Activated T-helper 1 cell treated with anti-CD3 and anti-CD28 coated beads, Interleukin-12 subunit alpha, Interleukin-12 subunit beta, Interleukin-2, Interleukin-4 antibody, amounts not matched to agents 30 ng/mL and 10 ng/mL and 1 ng/mL, durations not matched to agents 14 hours and 24 hours and 36 hours (primary cell): ENCODE measurements at regions of chr1 and their contacts with region 1.

Region 1: DNA sequence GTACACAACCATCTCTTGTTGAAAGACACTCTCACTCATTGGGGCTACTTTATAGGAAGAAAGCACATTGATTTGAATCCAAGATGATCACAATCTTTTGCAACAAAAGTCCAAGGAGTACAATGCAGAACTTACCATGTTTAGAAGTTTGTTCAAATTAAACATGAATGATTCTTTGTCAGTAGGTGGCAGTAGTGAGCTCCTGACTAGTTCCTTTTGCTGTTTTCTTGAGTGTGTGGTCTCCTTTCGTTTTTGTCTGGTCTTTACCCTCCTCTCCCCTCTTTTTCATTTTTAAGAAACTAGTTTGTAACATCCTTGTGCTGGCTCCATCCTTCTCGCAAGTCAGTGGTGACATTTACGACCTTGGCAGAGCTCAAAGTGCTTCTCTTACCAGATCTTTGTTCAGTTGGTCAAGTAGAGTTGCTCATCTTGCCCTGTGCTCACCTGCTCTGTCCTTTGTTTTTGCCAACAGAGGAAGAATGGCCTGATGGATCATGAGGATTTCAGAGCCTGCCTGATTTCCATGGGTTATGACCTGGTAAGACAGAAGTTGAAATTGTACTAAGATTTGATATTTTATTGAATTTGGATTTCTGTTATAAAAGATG is 35.7 kb upstream of the MTR start:
- DNase-seq: no peak
- H3K4me3 Mint-ChIP-seq: no peak overlapping the region
- H3K27ac Mint-ChIP-seq: no peak overlapping the region
- H3K4me1 Mint-ChIP-seq: peaks cover 5% of the 10 kb centered on the region
- H3K27me3 Mint-ChIP-seq: peaks cover 2% of the 10 kb centered on the region

Region 2: GRCh38 chr1:235617808-235618207 is 1141.5 kb before region 1 on chr1:
- intact Hi-C with region 1: no loop called
- DNase-seq: no peak
- H3K4me3 Mint-ChIP-seq: no peak overlapping the region
- H3K27ac Mint-ChIP-seq: no peak overlapping the region
- H3K4me1 Mint-ChIP-seq: no peaks in the 10 kb centered on the region
- H3K27me3 Mint-ChIP-seq: peaks cover 16% of the 10 kb centered on the region

Region 3: DNA sequence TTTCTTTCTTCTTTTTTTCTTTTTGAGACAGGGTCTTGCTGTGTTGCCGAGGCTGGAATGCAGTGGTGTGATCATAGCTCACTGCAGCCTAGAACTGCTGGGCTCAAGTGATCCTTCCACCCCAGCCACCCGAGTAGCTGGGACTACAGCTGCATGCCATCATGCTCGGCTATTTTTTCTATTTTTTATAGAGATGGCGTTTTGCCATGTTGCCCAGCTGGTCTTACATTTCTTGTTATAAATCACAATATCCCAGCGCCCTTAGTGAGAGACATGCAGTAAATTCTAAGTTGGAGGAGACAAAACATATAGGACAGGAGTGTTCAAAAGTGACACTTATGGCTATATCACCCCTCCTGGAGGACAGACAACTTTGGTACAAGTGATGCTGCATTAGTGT is 104.4 kb before region 1 on chr1:
- intact Hi-C with region 1: no loop called
- DNase-seq: no peak
- H3K4me3 Mint-ChIP-seq: no peak overlapping the region
- H3K27ac Mint-ChIP-seq: no peak overlapping the region
- H3K4me1 Mint-ChIP-seq: no peaks in the 10 kb centered on the region
- H3K27me3 Mint-ChIP-seq: peaks cover 4% of the 10 kb centered on the region

Region 4: GRCh38 chr1:236868625-236869467 is 109.5 kb after region 1 on chr1:
- intact Hi-C with region 1: loop called (anchors 1 kb)
- DNase-seq: peak; percentile 14
- H3K4me3 Mint-ChIP-seq: no peak overlapping the region
- H3K27ac Mint-ChIP-seq: no peak overlapping the region
- H3K4me1 Mint-ChIP-seq: peaks cover 18% of the 10 kb centered on the region
- H3K27me3 Mint-ChIP-seq: no peaks in the 10 kb centered on the region

Region 5: GRCh38 chr1:236913371-236914037 is 154.1 kb after region 1 on chr1:
- intact Hi-C with region 1: no loop called
- DNase-seq: no peak
- H3K4me3 Mint-ChIP-seq: no peak overlapping the region
- H3K27ac Mint-ChIP-seq: no peak overlapping the region
- H3K4me1 Mint-ChIP-seq: no peaks in the 10 kb centered on the region
- H3K27me3 Mint-ChIP-seq: peaks cover 2% of the 10 kb centered on the region

Region 6: DNA sequence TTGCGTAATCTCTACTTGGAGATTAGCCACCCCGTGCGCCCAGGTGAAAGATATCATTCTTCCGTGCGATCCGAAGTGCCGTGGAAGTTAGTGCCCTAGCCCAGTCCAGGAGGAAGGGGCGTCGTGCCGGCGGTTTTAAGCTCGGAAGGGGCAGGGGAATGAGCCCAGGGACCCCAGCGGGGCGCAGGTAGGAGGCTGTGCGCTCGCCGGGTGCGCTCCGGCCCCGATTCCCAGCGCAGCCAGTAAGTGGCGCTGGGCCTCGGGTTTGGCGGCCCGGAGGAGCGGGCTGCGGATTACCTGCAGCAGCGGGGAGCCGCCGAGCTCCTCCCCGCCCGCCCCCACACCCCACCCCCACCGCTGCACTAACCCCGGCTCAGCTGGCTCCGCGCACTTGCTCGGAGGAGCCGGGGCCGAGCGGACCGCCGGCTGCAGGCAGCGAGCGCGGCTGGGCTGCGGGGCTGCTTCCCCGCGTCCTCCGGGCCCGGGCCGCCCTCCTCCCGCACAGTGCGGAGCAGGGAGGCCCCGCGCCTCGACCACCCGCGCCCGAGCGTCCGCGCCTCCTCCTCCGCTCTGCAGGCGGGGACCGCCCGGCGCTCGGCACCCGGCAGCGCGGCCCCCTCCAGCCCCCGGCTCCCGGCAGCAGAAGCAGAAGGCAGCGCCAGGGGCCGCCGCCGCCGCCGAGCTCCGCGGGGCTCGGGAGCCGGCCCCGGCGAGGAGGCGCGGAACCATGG is 282.6 kb after region 1 on chr1 and contains the start of gene RYR2:
- intact Hi-C with region 1: loop called (anchors 10 kb)
- DNase-seq: no peak
- H3K4me3 Mint-ChIP-seq: peak within 1 kb of the TSS; percentile 32
- H3K27ac Mint-ChIP-seq: peak within 1 kb of the TSS; percentile 31
- H3K4me1 Mint-ChIP-seq: peaks cover 4% of the 10 kb centered on the region
- H3K27me3 Mint-ChIP-seq: peaks cover 52% of the 10 kb centered on the region
- total RNA-seq, gene RYR2: not detected in 2 replicates